ENCODE measurements at regions of chr12 and their contacts with region 1.

Region 1: GRCh38 chr12:109775172-109775881 is 57.9 kb downstream of the TRPV4 start:
- DNase-seq: peak; percentile 81 to 91
- ATAC-seq: peak; percentile 63
- H3K4me3 ChIP-seq: no peak overlapping the region
- H3K27ac ChIP-seq: no peak overlapping the region
- H3K4me1 ChIP-seq: no peaks in the 10 kb centered on the region
- H3K27me3 ChIP-seq: no peaks in the 10 kb centered on the region

Region 2: DNA sequence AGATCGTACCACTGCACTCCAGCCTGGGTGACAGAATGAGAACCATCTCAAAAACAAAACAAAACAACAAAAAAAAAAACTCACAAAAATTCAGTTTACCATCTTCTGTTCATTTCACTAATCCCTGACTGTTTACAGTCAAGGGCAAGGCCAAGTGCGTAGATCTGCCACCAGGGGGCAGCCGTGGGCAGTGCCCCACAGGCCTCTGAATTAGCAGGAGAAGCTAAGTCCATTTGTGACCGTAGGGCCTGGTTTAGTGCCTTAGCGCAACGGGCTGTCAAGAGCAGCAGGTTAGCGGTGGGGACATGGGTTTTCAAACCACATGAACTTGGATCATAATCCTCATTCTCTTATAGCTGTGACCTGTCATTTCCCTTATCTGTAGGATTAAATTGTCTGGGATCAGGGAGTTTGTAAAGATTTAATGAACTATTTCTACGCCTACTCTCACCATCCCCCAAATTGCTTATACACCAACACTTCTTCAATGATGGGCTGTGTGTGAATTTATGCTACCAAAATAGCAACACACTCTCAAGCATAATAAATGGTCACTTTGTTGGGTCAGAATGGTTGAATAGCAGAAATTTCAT is 347.2 kb before region 1 on chr12:
- intact Hi-C with region 1: loop called in 1 of 2 experiments (anchors 10 kb)
- DNase-seq: peak; percentile 86 to 94
- ATAC-seq: peak; percentile 91
- H3K4me3 ChIP-seq: no peak overlapping the region
- H3K27ac ChIP-seq: no peak overlapping the region
- H3K4me1 ChIP-seq: no peaks in the 10 kb centered on the region
- H3K27me3 ChIP-seq: no peaks in the 10 kb centered on the region

Region 3: GRCh38 chr12:109523071-109523470 is 252.3 kb before region 1 on chr12:
- intact Hi-C with region 1: loop called (anchors 5 to 10 kb)
- DNase-seq: peak in 1 of 2 donors; percentile 54
- ATAC-seq: no peak
- H3K4me3 ChIP-seq: no peak overlapping the region
- H3K27ac ChIP-seq: no peak overlapping the region
- H3K4me1 ChIP-seq: no peaks in the 10 kb centered on the region
- H3K27me3 ChIP-seq: no peaks in the 10 kb centered on the region

Region 4: DNA sequence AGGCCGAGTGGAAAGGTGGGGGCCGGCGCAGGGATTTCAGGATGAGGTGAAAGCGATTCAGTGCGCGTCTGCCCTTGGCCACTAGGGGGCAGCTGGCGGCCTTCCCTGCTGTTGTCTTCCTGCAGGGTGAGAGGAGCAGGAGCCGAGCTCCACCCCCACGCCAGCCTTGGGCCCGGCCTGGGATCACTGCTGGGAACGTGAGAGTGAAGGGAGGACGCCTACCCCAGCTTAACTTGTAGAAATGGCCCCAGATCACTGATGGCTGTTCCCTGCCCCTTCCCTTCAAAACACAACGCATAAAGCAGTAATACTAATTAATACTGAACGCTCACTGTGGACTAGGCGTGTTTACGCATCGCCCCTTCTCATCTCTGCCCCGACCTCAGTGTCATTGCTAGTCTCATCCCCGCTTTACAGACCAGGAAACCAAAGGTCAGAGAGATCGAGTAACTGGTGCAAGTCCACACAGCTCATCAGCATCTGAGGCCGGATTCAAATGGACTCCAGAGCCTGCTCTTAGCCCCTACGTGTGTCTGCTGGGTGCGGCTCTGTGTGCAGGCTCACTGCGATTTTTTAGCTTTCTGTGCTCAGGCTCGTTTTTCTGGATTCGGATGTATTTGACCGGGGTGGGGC is 177.4 kb before region 1 on chr12:
- intact Hi-C with region 1: loop called (anchors 1 to 2 kb)
- DNase-seq: peak; percentile 90 to 95
- ATAC-seq: peak; percentile 90
- H3K4me3 ChIP-seq: no peak overlapping the region
- H3K27ac ChIP-seq: no peak overlapping the region
- H3K4me1 ChIP-seq: no peaks in the 10 kb centered on the region
- H3K27me3 ChIP-seq: no peaks in the 10 kb centered on the region